Activated CD8-positive, alpha-beta T cell treated with anti-CD3 and anti-CD28 coated beads for 36 hours (primary cell): ENCODE measurements at regions of chr17 and their contacts with region 1.

Region 1: GRCh38 chr17:46841561-46842379 is 9.6 kb upstream of the WNT9B start:
- DNase-seq: peak; percentile 37
- ATAC-seq: peak; percentile 51
- H3K4me3 Mint-ChIP-seq: no peak overlapping the region
- H3K27ac Mint-ChIP-seq: no peak overlapping the region
- H3K4me1 Mint-ChIP-seq: no peaks in the 10 kb centered on the region
- H3K27me3 Mint-ChIP-seq: peaks cover 33% of the 10 kb centered on the region
- CTCF ChIP-seq: peak; percentile 89

Region 2: GRCh38 chr17:46770818-46771560 is 70.8 kb before region 1 on chr17:
- CTCF ChIA-PET with region 1: no interaction called
- POLR2A ChIA-PET with region 1: no interaction called
- intact Hi-C with region 1: no loop called
- DNase-seq: peak; percentile 43
- ATAC-seq: peak; percentile 57
- H3K4me3 Mint-ChIP-seq: peak overlapping the region; percentile 53
- H3K27ac Mint-ChIP-seq: no peak overlapping the region
- H3K4me1 Mint-ChIP-seq: peaks cover 19% of the 10 kb centered on the region
- H3K27me3 Mint-ChIP-seq: peaks cover 32% of the 10 kb centered on the region
- CTCF ChIP-seq: no peak

Region 3: DNA sequence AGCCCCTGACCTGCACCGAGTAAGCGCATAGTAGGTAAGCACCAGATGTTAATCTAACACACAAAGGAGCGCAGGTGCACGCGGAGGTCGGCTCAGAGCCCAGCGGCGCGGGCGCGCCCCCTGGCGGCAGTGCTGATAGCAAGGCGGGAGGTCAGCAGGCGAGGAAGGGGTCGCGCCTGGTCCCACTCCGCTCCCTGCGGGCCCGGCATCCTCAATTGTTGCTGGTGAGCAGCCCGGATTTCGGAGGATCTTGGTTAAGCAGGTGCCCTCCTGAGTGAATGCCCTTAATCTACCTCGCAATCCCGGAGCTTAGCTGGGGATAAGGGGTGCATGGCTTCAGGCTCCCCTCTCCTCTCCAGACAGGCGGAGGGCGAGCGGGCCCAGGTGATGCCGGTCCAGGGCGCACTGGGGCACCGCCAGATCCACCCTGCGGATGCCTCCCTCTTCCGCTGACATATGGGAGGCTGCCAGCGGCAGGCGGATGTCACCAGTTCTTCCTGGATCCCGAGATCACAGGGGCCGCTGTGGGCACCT is 19.3 kb before region 1 on chr17:
- CTCF ChIA-PET with region 1: interaction called, 20 read pairs
- POLR2A ChIA-PET with region 1: no interaction called
- intact Hi-C with region 1: no loop called
- DNase-seq: peak; percentile 60
- ATAC-seq: no peak
- H3K4me3 Mint-ChIP-seq: no peak overlapping the region
- H3K27ac Mint-ChIP-seq: no peak overlapping the region
- H3K4me1 Mint-ChIP-seq: peaks cover 13% of the 10 kb centered on the region
- H3K27me3 Mint-ChIP-seq: peaks cover 43% of the 10 kb centered on the region
- CTCF ChIP-seq: peak; percentile 97

Region 4: GRCh38 chr17:46859996-46860395 is 18.2 kb after region 1 on chr17:
- CTCF ChIA-PET with region 1: interaction called, 12 read pairs
- POLR2A ChIA-PET with region 1: interaction called, 3 read pairs
- intact Hi-C with region 1: no loop called
- DNase-seq: no peak
- ATAC-seq: no peak
- H3K4me3 Mint-ChIP-seq: no peak overlapping the region
- H3K27ac Mint-ChIP-seq: no peak overlapping the region
- H3K4me1 Mint-ChIP-seq: no peaks in the 10 kb centered on the region
- H3K27me3 Mint-ChIP-seq: peaks cover 20% of the 10 kb centered on the region
- CTCF ChIP-seq: no peak

Region 5: GRCh38 chr17:46910179-46910927 is 68.6 kb after region 1 on chr17:
- CTCF ChIA-PET with region 1: no interaction called
- POLR2A ChIA-PET with region 1: no interaction called
- intact Hi-C with region 1: no loop called
- DNase-seq: no peak
- ATAC-seq: no peak
- H3K4me3 Mint-ChIP-seq: no peak overlapping the region
- H3K27ac Mint-ChIP-seq: no peak overlapping the region
- H3K4me1 Mint-ChIP-seq: peaks cover 3% of the 10 kb centered on the region
- H3K27me3 Mint-ChIP-seq: peaks cover 3% of the 10 kb centered on the region
- CTCF ChIP-seq: no peak